ENCODE measurements at regions of chr10 and their contacts with region 1.

Region 1: GRCh38 chr10:101130984-101131961 is at the start of gene TLX1:
- DNase-seq: peak; percentile 59
- H3K4me3 Mint-ChIP-seq: no peak within 1 kb of the TSS
- H3K27ac Mint-ChIP-seq: no peak within 1 kb of the TSS
- H3K4me1 Mint-ChIP-seq: peaks cover 13% of the 10 kb centered on the region
- H3K27me3 Mint-ChIP-seq: peaks cover 85% of the 10 kb centered on the region
- total RNA-seq, gene TLX1: not detected in 2 replicates

Region 2: GRCh38 chr10:100827819-100828737 is 303.2 kb before region 1 on chr10:
- intact Hi-C with region 1: loop called (anchors 5 kb)
- DNase-seq: peak; percentile 77
- H3K4me3 Mint-ChIP-seq: peak overlapping the region; percentile 85
- H3K27ac Mint-ChIP-seq: peak overlapping the region; percentile 52
- H3K4me1 Mint-ChIP-seq: peaks cover 24% of the 10 kb centered on the region
- H3K27me3 Mint-ChIP-seq: peaks cover 79% of the 10 kb centered on the region

Region 3: DNA sequence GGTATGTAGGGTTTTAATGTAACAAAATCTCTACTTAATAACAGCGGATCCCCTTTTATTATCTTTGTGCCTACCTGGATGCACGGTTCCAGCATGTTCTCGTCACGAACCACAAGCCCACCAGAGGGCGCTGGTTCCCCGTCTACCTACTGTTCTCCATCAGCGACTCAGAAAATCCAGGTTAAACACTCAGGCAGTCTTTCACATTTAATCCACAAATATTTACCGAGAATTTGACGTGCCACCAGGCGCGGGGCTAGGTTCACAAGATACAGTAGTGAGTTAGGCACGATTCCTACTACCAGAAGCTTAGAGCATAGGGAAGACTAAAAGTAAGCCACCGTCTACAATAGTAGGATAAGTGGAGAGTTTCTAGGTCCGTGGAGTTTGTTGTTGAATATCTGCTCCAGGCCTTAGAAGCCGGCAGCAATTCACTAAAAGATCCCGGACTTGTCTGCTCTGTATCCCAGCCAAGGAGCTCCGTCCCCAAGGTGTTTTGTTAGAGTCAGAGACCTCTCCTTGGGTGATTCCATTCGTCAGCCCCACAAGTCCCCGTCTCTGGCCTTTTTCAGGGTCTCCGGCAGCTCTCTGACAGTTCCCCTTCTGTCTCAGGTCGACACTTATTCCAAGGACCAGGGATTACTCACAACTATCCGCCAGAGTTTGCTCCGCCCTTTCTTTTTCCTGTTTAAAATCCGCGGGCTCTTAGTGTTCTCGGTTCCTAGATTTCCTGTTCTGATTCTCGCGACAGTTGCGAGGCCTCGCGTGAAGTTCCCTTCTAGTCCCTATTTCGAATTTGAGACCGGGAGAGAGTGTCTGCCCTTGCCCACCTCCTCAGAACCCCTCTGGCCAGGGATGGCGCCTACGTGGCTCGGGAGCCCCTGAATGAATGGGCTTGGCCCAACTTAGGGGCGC is 71.0 kb before region 1 on chr10:
- intact Hi-C with region 1: no loop called
- DNase-seq: peak; percentile 97
- H3K4me3 Mint-ChIP-seq: peak overlapping the region; percentile 84
- H3K27ac Mint-ChIP-seq: peak overlapping the region; percentile 96
- H3K4me1 Mint-ChIP-seq: peaks cover 33% of the 10 kb centered on the region
- H3K27me3 Mint-ChIP-seq: peaks cover 26% of the 10 kb centered on the region

Region 4: DNA sequence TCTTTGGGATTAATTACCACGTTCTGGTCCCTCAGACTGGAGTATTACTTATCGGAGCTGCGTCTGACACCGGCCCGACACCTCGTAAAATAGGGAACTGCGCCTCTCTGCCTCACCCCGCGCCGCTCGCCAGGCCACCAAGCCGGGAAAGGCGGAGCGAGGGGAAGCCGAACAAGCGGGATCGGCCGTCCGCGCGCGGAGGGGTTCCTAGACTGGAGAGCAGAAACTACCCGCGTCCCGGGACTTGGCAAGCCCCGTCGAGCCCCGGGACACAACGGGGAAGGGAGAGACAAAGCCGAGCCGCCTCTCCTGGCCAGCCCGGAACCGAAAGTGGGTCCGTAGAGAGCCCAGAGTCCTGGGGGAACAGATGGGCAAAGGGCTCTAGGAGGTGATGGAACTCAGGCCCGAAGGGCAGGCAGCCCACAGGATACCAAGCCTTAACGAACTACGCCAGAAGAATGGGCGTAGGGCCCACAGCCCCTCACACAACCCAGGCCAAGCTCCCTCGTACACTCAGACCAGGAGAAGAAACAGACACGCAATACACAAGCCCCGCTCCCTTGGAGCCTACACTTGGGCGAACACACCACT is 91.5 kb after region 1 on chr10:
- intact Hi-C with region 1: loop called (anchors 2 kb)
- DNase-seq: peak; percentile 61
- H3K4me3 Mint-ChIP-seq: no peak overlapping the region
- H3K27ac Mint-ChIP-seq: peak overlapping the region; percentile 8
- H3K4me1 Mint-ChIP-seq: peaks cover 25% of the 10 kb centered on the region
- H3K27me3 Mint-ChIP-seq: peaks cover 85% of the 10 kb centered on the region